ENCODE measurements at regions of chr2 and their contacts with region 1.

Region 1: GRCh38 chr2:193946806-193947205 is 1710.2 kb upstream of the SLC39A10 start:
- DNase-seq: no peak
- ATAC-seq: no peak
- H3K4me3 ChIP-seq: no peak overlapping the region
- H3K27ac ChIP-seq: no peak overlapping the region
- H3K4me1 ChIP-seq: no peaks in the 10 kb centered on the region
- H3K27me3 ChIP-seq: no peaks in the 10 kb centered on the region
- CTCF ChIP-seq: no peak
- POLR2A ChIP-seq: no peak

Region 2: GRCh38 chr2:193935114-193935513 is 11.7 kb before region 1 on chr2:
- intact Hi-C with region 1: no loop called
- DNase-seq: no peak
- ATAC-seq: no peak
- H3K4me3 ChIP-seq: no peak overlapping the region
- H3K27ac ChIP-seq: no peak overlapping the region
- H3K4me1 ChIP-seq: no peaks in the 10 kb centered on the region
- H3K27me3 ChIP-seq: no peaks in the 10 kb centered on the region
- CTCF ChIP-seq: no peak
- POLR2A ChIP-seq: no peak

Region 3: GRCh38 chr2:193960874-193961273 is 14.1 kb after region 1 on chr2:
- intact Hi-C with region 1: loop called in 1 of 10 experiments (anchors 1 kb)
- DNase-seq: no peak
- ATAC-seq: no peak
- H3K4me3 ChIP-seq: no peak overlapping the region
- H3K27ac ChIP-seq: no peak overlapping the region
- H3K4me1 ChIP-seq: no peaks in the 10 kb centered on the region
- H3K27me3 ChIP-seq: no peaks in the 10 kb centered on the region
- CTCF ChIP-seq: no peak
- POLR2A ChIP-seq: no peak

Region 4: DNA sequence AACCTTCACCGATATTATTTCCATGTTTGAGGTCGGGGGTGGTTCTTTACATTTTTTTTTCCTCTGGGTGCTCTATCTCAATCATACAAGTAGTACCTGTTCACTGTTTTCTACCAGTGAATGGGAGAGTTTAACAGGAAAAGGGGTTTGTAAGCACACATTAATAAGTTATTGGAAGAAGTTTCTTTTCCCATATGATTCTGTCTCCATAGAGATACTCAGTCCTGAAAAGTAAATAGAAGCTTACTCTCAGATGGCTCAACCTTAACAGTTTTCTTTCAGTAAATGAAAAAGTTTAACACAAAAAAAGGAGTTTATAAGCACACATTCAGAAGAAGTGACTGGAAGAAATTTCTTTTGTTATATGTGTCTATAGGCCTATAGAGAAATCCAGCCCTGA is 714.6 kb after region 1 on chr2:
- intact Hi-C with region 1: no loop called
- DNase-seq: no peak
- ATAC-seq: no peak
- H3K4me3 ChIP-seq: no peak overlapping the region
- H3K27ac ChIP-seq: no peak overlapping the region
- H3K4me1 ChIP-seq: no peaks in the 10 kb centered on the region
- H3K27me3 ChIP-seq: no peaks in the 10 kb centered on the region
- CTCF ChIP-seq: no peak
- POLR2A ChIP-seq: no peak